Naive thymus-derived CD4-positive, alpha-beta T cell (primary cell): ENCODE measurements at regions of chr19 and their contacts with region 1.

Region 1: GRCh38 chr19:52823676-52824075 is 2.2 kb upstream of the ZNF28 start:
- DNase-seq: no peak
- ATAC-seq: no peak
- H3K4me3 ChIP-seq: no peak overlapping the region
- H3K4me3 Mint-ChIP-seq: no peak overlapping the region
- H3K27ac ChIP-seq: no peak overlapping the region
- H3K27ac Mint-ChIP-seq: no peak overlapping the region
- H3K4me1 ChIP-seq: no peaks in the 10 kb centered on the region
- H3K4me1 Mint-ChIP-seq: peaks cover 11 to 23% (median 15%) of the 10 kb centered on the region in 7 donors
- H3K27me3 ChIP-seq: no peaks in the 10 kb centered on the region
- H3K27me3 Mint-ChIP-seq: peaks cover 0 to 5% (median 0%) of the 10 kb centered on the region in 5 donors

Region 2: GRCh38 chr19:52621376-52621775 is 202.3 kb before region 1 on chr19:
- CTCF ChIA-PET with region 1: no interaction called
- POLR2A ChIA-PET with region 1: no interaction called
- intact Hi-C with region 1: no loop called
- DNase-seq: no peak
- ATAC-seq: no peak
- H3K4me3 ChIP-seq: no peak overlapping the region
- H3K4me3 Mint-ChIP-seq: peak overlapping the region in 2 of 10 donors; percentile 43 to 47
- H3K27ac ChIP-seq: no peak overlapping the region
- H3K27ac Mint-ChIP-seq: peak overlapping the region in 5 of 9 donors; percentile 4 to 64 (median 38)
- H3K4me1 ChIP-seq: no peaks in the 10 kb centered on the region
- H3K4me1 Mint-ChIP-seq: peaks cover 0 to 30% (median 11%) of the 10 kb centered on the region in 7 donors
- H3K27me3 ChIP-seq: no peaks in the 10 kb centered on the region
- H3K27me3 Mint-ChIP-seq: no peaks in the 10 kb centered on the region

Region 3: GRCh38 chr19:52781501-52781900 is 42.2 kb before region 1 on chr19:
- CTCF ChIA-PET with region 1: no interaction called
- POLR2A ChIA-PET with region 1: interaction called, 4 read pairs
- intact Hi-C with region 1: loop called in 1 of 2 experiments (anchors 5 kb)
- DNase-seq: no peak
- ATAC-seq: no peak
- H3K4me3 ChIP-seq: no peak overlapping the region
- H3K4me3 Mint-ChIP-seq: no peak overlapping the region
- H3K27ac ChIP-seq: no peak overlapping the region
- H3K27ac Mint-ChIP-seq: no peak overlapping the region
- H3K4me1 ChIP-seq: peaks cover 0 to 16% of the 10 kb centered on the region in 2 donors
- H3K4me1 Mint-ChIP-seq: peaks cover 12 to 40% (median 24%) of the 10 kb centered on the region in 7 donors
- H3K27me3 ChIP-seq: no peaks in the 10 kb centered on the region
- H3K27me3 Mint-ChIP-seq: no peaks in the 10 kb centered on the region